ENCODE measurements at regions of chrX and their contacts with region 1.

Region 1: GRCh38 chrX:69285881-69286564 is 120.8 kb upstream of the PJA1 start:
- DNase-seq: peak; percentile 61
- ATAC-seq: peak; percentile 75
- H3K4me3 ChIP-seq: peak overlapping the region in 4 of 5 experiments; percentile 24 to 58 (median 48)
- H3K4me3 Mint-ChIP-seq: peak overlapping the region; percentile 44
- H3K27ac ChIP-seq: no peak overlapping the region
- H3K27ac Mint-ChIP-seq: no peak overlapping the region
- H3K4me1 ChIP-seq: peaks cover 9% of the 10 kb centered on the region in 2 donors
- H3K4me1 Mint-ChIP-seq: no peaks in the 10 kb centered on the region
- H3K27me3 ChIP-seq: peaks cover 0 to 2% (median 0%) of the 10 kb centered on the region in 4 experiments
- H3K27me3 Mint-ChIP-seq: no peaks in the 10 kb centered on the region
- CTCF ChIP-seq: peak; percentile 74

Region 2: GRCh38 chrX:68732906-68733493 is 553.0 kb before region 1 on chrX:
- CTCF ChIA-PET with region 1: interaction called, 3 read pairs
- POLR2A ChIA-PET with region 1: no interaction called
- intact Hi-C with region 1: loop called (anchors 10 kb)
- DNase-seq: peak; percentile 32
- ATAC-seq: no peak
- H3K4me3 ChIP-seq: no peak overlapping the region
- H3K4me3 Mint-ChIP-seq: no peak overlapping the region
- H3K27ac ChIP-seq: no peak overlapping the region
- H3K27ac Mint-ChIP-seq: no peak overlapping the region
- H3K4me1 ChIP-seq: no peaks in the 10 kb centered on the region
- H3K4me1 Mint-ChIP-seq: no peaks in the 10 kb centered on the region
- H3K27me3 ChIP-seq: peaks cover 0 to 3% (median 0%) of the 10 kb centered on the region in 4 experiments
- H3K27me3 Mint-ChIP-seq: peaks cover 13% of the 10 kb centered on the region
- CTCF ChIP-seq: peak; percentile 50

Region 3: DNA sequence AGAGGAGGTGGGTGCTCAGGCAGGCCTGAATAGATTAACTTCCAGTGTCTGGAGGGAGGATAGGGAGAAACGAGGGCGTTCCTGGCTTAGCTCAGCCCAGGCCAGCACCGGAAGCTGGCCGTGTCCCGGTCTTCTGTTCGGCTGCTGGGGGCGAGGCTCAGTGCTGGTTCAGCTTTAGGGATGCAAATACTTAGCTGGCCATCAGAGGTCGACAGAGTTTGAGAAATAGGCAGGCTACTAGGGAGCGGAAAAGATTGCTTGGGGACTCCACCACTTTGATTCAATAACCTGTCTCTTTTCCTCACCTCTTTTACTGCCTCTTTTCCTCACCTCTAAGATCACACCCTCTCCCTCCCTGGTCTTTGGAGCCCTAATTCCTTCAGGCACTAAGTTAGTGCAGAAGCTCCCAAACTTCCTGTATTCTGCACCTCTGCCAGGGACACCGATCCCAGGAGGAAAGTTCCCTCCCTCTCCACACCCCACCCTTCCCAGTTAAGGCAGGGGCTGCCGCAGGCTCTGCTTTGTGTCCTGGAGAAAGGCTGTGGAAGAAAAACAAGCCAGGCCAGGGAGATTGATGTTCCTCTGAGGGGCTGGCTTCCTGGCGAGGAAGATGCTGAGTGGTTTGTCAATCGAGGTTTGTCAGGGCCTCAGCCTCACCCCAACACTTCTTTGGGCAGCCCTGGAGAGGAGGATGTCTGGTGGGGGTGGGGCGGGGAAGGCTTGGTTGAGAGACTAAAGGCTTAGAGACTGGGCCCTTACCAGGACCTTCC is 463.2 kb before region 1 on chrX:
- CTCF ChIA-PET with region 1: interaction called, 33 read pairs
- POLR2A ChIA-PET with region 1: no interaction called
- intact Hi-C with region 1: loop called (anchors 1 kb)
- DNase-seq: no peak
- ATAC-seq: peak; percentile 47
- H3K4me3 ChIP-seq: no peak overlapping the region
- H3K4me3 Mint-ChIP-seq: no peak overlapping the region
- H3K27ac ChIP-seq: no peak overlapping the region
- H3K27ac Mint-ChIP-seq: no peak overlapping the region
- H3K4me1 ChIP-seq: peaks cover 0 to 3% of the 10 kb centered on the region in 2 donors
- H3K4me1 Mint-ChIP-seq: peaks cover 2% of the 10 kb centered on the region
- H3K27me3 ChIP-seq: no peaks in the 10 kb centered on the region
- H3K27me3 Mint-ChIP-seq: no peaks in the 10 kb centered on the region
- CTCF ChIP-seq: no peak

Region 4: GRCh38 chrX:69060631-69061408 is 225.2 kb before region 1 on chrX:
- CTCF ChIA-PET with region 1: no interaction called
- POLR2A ChIA-PET with region 1: no interaction called
- intact Hi-C with region 1: no loop called
- DNase-seq: no peak
- ATAC-seq: no peak
- H3K4me3 ChIP-seq: no peak overlapping the region
- H3K4me3 Mint-ChIP-seq: no peak overlapping the region
- H3K27ac ChIP-seq: no peak overlapping the region
- H3K27ac Mint-ChIP-seq: no peak overlapping the region
- H3K4me1 ChIP-seq: no peaks in the 10 kb centered on the region
- H3K4me1 Mint-ChIP-seq: no peaks in the 10 kb centered on the region
- H3K27me3 ChIP-seq: no peaks in the 10 kb centered on the region
- H3K27me3 Mint-ChIP-seq: no peaks in the 10 kb centered on the region
- CTCF ChIP-seq: no peak

Region 5: DNA sequence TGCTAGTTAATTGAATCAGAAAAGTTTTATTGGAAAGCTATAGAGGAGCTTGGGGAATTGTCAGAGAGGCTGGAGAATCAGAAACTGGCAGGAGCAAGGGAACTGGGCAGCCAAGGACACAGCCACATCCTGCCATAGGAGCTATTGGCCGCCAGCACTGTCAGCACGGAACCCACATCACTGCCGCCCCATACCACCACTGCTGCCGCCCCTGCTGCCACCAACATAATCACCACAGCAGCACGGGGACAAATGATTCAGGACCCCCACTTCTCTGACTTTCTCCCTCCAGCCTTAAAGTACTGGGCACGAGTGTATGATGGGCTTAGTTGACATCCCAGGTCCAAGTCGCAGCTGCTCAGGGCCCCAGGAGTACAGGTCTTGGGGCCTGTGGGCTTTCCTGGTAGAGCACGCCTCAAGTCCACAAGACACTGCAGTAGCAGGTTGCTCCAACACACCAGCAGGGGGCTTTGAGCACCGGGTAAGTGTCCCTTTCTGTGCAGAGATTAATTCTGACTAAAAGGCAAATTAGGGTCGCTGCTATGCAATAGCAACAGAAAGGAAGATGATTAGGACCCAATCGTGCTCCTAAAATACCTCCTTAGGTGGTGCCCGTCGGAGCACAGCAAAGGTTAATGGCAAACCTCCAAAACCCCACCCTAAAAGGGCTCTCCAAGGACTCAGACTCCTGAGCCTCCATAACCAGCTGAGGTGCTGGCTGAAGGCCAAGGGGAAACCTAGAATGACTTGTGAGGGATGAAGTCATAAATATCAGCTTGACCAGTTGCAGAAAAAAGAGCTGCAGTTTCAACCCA is 127.7 kb before region 1 on chrX:
- CTCF ChIA-PET with region 1: no interaction called
- POLR2A ChIA-PET with region 1: no interaction called
- intact Hi-C with region 1: loop called (anchors 2 kb)
- DNase-seq: peak; percentile 33
- ATAC-seq: peak; percentile 60
- H3K4me3 ChIP-seq: no peak overlapping the region
- H3K4me3 Mint-ChIP-seq: no peak overlapping the region
- H3K27ac ChIP-seq: no peak overlapping the region
- H3K27ac Mint-ChIP-seq: no peak overlapping the region
- H3K4me1 ChIP-seq: no peaks in the 10 kb centered on the region
- H3K4me1 Mint-ChIP-seq: peaks cover 4% of the 10 kb centered on the region
- H3K27me3 ChIP-seq: no peaks in the 10 kb centered on the region
- H3K27me3 Mint-ChIP-seq: no peaks in the 10 kb centered on the region
- CTCF ChIP-seq: peak; percentile 44

Region 6: DNA sequence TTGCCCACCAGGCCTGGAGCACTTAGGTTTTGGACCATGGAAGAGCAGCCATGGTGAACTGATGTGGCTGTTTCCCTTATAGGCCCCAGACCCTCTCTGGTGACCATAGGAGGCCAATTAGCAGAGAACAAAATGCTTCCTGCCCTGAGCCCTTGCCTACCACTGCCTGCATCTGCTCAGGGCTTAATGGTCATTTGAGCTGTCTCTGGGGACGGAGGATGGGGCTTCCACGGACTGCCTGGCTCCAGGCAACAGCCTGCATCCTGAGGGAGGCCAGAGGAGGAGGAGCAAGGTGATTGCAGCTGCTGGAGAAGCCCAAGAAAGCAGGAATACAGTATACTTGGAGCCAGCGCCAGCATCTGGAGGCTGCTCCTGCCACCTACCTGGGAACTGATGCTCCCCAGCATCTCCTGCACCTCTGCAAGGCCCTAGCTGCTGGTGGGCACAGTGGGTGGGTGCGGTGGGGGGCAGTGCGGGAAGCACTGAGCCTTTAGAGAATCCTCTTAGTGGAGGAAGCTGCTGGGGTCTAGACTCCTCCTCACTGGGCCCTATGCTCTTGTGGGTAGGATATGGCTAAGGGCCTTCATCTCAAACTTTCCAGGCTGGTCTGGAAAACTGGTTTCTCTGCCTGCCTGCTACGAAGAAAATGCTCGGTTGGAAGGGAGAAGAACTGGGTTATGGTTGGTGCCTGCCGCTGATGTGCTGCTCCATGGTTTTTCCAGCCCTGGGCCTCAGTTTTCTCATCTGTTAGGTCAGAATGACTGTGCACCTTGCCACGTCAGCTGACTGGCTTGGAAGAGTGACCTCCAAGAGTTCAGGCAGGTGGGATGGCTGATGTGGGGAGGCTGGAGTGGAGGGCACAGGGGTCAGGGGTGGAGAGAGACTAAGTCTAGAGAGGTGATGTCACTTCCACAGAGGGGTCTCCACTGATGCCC is 38.0 kb after region 1 on chrX:
- CTCF ChIA-PET with region 1: no interaction called
- POLR2A ChIA-PET with region 1: no interaction called
- intact Hi-C with region 1: no loop called
- DNase-seq: no peak
- ATAC-seq: no peak
- H3K4me3 ChIP-seq: no peak overlapping the region
- H3K4me3 Mint-ChIP-seq: no peak overlapping the region
- H3K27ac ChIP-seq: no peak overlapping the region
- H3K27ac Mint-ChIP-seq: no peak overlapping the region
- H3K4me1 ChIP-seq: no peaks in the 10 kb centered on the region
- H3K4me1 Mint-ChIP-seq: no peaks in the 10 kb centered on the region
- H3K27me3 ChIP-seq: no peaks in the 10 kb centered on the region
- H3K27me3 Mint-ChIP-seq: no peaks in the 10 kb centered on the region
- CTCF ChIP-seq: no peak

Measured in B cell (primary cell).